Activated naive CD4-positive, alpha-beta T cell treated with anti-CD3 and anti-CD28 coated beads for 36 hours (primary cell): ENCODE measurements at regions of chr15 and their contacts with region 1.

Region 1: GRCh38 chr15:85504749-85505676 is 124.6 kb downstream of the AKAP13 start:
- DNase-seq: peak; percentile 71
- H3K4me3 Mint-ChIP-seq: no peak overlapping the region
- H3K27ac Mint-ChIP-seq: no peak overlapping the region
- H3K4me1 Mint-ChIP-seq: peaks cover 55% of the 10 kb centered on the region
- H3K27me3 Mint-ChIP-seq: no peaks in the 10 kb centered on the region

Region 2: GRCh38 chr15:85296615-85297402 is 208.2 kb before region 1 on chr15:
- CTCF ChIA-PET with region 1: interaction called, 11 read pairs
- intact Hi-C with region 1: loop called (anchors 1 kb)
- DNase-seq: peak; percentile 85
- H3K4me3 Mint-ChIP-seq: peak overlapping the region; percentile 51
- H3K27ac Mint-ChIP-seq: no peak overlapping the region
- H3K4me1 Mint-ChIP-seq: peaks cover 10% of the 10 kb centered on the region
- H3K27me3 Mint-ChIP-seq: no peaks in the 10 kb centered on the region

Region 3: DNA sequence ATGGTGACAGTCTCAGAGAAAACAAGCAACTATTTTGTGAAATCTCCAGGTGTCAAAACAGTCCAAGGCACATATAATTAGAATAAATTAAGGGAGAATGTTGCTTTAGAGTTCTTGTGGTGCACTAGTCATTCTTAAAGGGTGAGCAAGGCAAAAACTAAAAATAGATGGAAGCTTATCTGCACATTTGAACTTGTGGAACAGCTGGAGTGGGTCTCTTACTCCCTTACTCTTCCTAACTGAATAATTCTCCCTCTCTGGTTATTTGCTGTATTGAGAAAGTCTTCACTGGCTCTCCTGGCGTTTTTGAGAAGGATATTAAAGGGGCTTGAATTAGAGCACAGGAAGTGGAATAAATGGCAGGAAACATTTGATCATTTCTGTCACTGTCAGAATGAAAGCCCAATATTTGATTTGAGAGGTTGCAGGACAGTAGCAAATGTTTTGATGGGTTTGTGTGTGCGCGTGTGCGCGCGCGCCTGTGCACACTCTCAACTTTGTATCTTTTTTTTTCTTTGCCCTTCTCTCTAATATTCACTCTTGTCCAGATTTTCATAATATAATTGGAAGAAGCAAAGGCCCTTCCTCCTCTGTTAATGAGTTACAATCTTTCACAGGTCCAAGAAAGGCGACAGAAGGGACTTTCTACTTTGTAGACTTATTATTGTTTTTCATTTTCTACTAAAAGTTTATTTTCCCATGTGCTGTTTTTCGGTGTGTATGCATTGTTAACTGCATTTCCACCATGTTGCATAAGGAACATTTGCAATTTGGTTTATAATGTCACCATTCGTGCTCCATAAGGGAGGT is 83.7 kb before region 1 on chr15:
- CTCF ChIA-PET with region 1: no interaction called
- intact Hi-C with region 1: no loop called
- DNase-seq: no peak
- H3K4me3 Mint-ChIP-seq: no peak overlapping the region
- H3K27ac Mint-ChIP-seq: no peak overlapping the region
- H3K4me1 Mint-ChIP-seq: peaks cover 63% of the 10 kb centered on the region
- H3K27me3 Mint-ChIP-seq: no peaks in the 10 kb centered on the region

Region 4: DNA sequence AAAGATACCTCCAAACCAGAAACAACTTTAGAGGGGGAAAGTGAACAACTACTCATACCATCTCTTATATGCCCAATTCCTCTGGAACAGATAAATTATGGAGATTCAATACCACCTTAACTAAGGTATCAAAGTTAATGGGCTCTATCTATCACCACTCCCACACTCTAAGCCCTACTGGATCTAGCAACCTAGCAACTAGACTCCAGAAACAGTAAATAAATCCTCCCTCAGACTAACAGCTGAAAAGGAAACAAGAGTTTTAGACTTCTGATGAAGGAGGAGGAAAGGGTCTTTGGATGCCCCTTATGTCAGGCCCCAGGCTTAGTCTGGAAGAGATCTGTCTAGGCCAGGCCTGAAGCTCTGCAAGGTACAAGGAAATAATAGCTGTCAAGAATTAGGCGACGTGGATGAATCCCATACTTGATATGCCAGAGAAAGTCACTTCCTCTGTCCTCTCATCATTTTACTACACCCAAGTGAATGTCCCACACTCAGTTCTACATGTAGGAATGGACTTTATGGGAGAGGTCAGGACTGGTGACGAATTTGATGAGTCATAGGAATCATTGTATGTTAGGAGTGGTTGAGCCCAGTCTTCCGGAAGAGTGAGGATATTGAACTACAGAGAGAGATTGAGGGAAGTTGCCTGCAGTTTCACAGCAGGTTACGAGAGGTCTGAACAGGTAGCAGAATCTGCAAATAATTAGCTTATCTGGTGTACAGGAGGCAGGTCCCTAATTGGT is 10.8 kb before region 1 on chr15:
- CTCF ChIA-PET with region 1: interaction called, 30 read pairs
- intact Hi-C with region 1: no loop called
- DNase-seq: no peak
- H3K4me3 Mint-ChIP-seq: no peak overlapping the region
- H3K27ac Mint-ChIP-seq: no peak overlapping the region
- H3K4me1 Mint-ChIP-seq: peaks cover 66% of the 10 kb centered on the region
- H3K27me3 Mint-ChIP-seq: no peaks in the 10 kb centered on the region

Region 5: DNA sequence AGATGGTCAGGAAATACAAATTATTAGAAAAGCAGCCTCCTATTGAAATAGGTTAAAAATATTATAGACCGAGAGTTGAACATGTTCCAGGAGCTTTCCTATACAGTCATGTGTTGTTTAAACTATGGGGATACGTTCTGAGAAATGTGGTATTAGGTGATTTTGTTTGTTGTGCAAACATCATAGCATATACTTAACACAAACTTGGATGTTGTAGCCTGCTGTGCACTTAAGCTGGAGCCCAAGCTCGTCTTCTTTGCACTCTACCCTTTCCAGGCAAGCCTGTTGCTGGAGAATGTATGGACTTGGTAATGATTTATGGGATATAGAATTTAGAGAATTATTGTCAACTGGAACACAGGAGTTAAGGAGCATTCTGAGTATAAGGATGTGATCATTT is 15.6 kb after region 1 on chr15:
- CTCF ChIA-PET with region 1: interaction called, 21 read pairs
- intact Hi-C with region 1: loop called (anchors 2 kb)
- DNase-seq: no peak
- H3K4me3 Mint-ChIP-seq: no peak overlapping the region
- H3K27ac Mint-ChIP-seq: no peak overlapping the region
- H3K4me1 Mint-ChIP-seq: peaks cover 27% of the 10 kb centered on the region
- H3K27me3 Mint-ChIP-seq: no peaks in the 10 kb centered on the region

Region 6: GRCh38 chr15:85555875-85556617 is 51.0 kb after region 1 on chr15:
- CTCF ChIA-PET with region 1: interaction called, 11 read pairs
- intact Hi-C with region 1: no loop called
- DNase-seq: no peak
- H3K4me3 Mint-ChIP-seq: no peak overlapping the region
- H3K27ac Mint-ChIP-seq: peak overlapping the region; percentile 48
- H3K4me1 Mint-ChIP-seq: peaks cover 52% of the 10 kb centered on the region
- H3K27me3 Mint-ChIP-seq: no peaks in the 10 kb centered on the region

Region 7: GRCh38 chr15:85723960-85724945 is 219.2 kb after region 1 on chr15:
- CTCF ChIA-PET with region 1: interaction called, 6 read pairs
- intact Hi-C with region 1: loop called (anchors 5 kb)
- DNase-seq: peak; percentile 41
- H3K4me3 Mint-ChIP-seq: peak overlapping the region; percentile 43
- H3K27ac Mint-ChIP-seq: peak overlapping the region; percentile 97
- H3K4me1 Mint-ChIP-seq: peaks cover 67% of the 10 kb centered on the region
- H3K27me3 Mint-ChIP-seq: no peaks in the 10 kb centered on the region